ENCODE measurements at regions of chr6 and their contacts with region 1.

Region 1: GRCh38 chr6:154986787-154987235 is 8.3 kb upstream of the TIAM2 start:
- DNase-seq: no peak
- H3K4me3 ChIP-seq: no peak overlapping the region
- CTCF ChIP-seq: no peak

Region 2: GRCh38 chr6:154888426-154889295 is 98.2 kb before region 1 on chr6:
- in situ Hi-C with region 1: loop called (anchors 5 kb)
- DNase-seq: no peak
- H3K4me3 ChIP-seq: no peak overlapping the region
- CTCF ChIP-seq: no peak

Region 3: DNA sequence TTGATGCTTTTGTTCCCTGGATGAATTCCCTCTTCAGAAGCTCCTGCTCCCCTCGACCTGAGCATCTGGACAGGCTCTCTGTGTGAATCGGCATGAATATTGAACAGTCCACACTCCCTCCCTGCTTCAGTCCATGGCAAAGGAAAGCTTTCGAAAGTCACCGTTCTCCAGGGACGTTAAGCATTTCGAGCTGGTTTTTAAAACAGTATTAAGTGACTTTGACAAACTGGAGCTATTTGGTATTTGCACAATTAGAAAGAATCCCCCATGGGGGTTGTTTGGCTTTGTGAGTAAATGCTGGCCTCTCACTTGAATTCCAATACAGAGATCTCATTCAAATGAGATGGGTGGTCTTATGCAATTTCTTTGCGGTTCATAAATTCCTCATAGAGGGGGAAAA is 77.0 kb before region 1 on chr6:
- in situ Hi-C with region 1: no loop called
- DNase-seq: peak; percentile 60
- H3K4me3 ChIP-seq: no peak overlapping the region
- CTCF ChIP-seq: no peak

Measured in astrocyte of the cerebellum (primary cell).